ENCODE measurements at regions of chr4 and their contacts with region 1.

Region 1: DNA sequence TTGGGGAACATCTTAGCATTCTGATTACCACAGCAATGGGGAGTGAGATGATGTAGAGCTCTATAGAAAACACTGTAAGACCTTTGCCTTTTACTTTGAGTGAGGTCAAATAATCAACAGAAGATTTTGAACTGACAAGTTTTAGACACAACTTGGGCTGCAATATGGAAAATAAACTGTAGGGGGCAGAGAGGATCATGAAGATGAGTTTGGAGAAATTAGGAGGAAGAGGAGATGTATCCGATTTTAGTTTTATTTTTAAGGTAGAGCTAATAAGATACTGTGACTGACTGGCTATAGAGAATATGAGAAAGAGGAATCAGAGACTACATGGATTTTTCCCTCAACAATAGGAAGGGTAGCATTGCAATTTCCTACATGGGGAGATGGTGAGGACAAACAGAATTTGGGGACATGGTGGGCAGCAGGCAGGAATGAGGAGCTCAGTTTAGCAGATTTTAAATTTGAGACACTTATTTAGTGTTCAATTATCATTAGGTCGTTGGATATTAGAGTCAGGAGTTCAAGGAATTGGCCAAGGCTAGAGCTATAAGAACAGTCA is 563.1 kb downstream of the INPP4B start:
- DNase-seq: no peak
- ATAC-seq: no peak
- H3K4me3 Mint-ChIP-seq: no peak overlapping the region
- H3K27ac Mint-ChIP-seq: no peak overlapping the region
- H3K4me1 Mint-ChIP-seq: peaks cover 6% of the 10 kb centered on the region
- H3K27me3 Mint-ChIP-seq: no peaks in the 10 kb centered on the region

Region 2: DNA sequence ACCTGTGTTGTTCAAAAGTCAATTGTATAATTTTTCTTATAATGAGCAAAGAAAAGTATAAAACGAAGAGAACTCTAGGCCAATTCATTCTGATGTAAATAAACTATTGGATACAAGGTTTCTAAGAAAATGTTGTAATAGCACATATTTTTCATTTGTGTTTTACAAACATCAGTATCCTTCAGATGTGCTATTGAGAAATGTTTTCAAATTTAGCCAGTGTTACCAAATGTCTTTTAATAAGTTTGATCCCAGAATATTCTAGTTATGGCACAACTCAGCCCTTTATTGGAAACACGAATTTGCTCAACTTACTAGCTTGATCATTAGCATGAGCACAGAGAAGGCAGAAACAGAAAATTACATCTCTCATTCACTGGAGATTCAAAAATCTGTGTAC is 327.3 kb before region 1 on chr4:
- CTCF ChIA-PET with region 1: no interaction called
- POLR2A ChIA-PET with region 1: no interaction called
- DNase-seq: no peak
- ATAC-seq: no peak
- H3K4me3 Mint-ChIP-seq: no peak overlapping the region
- H3K27ac Mint-ChIP-seq: no peak overlapping the region
- H3K4me1 Mint-ChIP-seq: no peaks in the 10 kb centered on the region
- H3K27me3 Mint-ChIP-seq: no peaks in the 10 kb centered on the region

Region 3: DNA sequence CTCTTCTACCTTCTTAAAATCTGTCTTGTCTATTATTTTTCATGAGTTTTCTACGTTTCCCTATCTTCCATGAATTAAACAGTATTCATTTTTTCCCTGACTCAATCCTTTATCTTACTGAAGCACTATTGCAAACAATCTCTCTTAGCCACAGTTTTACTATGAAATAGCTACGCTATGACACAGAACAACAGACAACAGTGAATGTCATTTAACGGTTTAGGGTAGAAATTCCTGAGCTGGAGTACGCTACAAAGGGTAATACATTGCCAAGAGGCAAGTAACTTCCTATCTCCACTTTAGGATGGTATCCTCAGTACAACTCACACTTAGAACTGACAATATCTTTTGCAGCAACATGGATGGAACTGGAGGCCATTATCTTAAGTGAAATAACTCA is 10.6 kb after region 1 on chr4:
- CTCF ChIA-PET with region 1: interaction called, 20 read pairs
- POLR2A ChIA-PET with region 1: no interaction called
- DNase-seq: no peak
- ATAC-seq: no peak
- H3K4me3 Mint-ChIP-seq: no peak overlapping the region
- H3K27ac Mint-ChIP-seq: no peak overlapping the region
- H3K4me1 Mint-ChIP-seq: peaks cover 12% of the 10 kb centered on the region
- H3K27me3 Mint-ChIP-seq: no peaks in the 10 kb centered on the region